T-cell (primary cell): ENCODE measurements at regions of chr14 and their contacts with region 1.

Region 1: DNA sequence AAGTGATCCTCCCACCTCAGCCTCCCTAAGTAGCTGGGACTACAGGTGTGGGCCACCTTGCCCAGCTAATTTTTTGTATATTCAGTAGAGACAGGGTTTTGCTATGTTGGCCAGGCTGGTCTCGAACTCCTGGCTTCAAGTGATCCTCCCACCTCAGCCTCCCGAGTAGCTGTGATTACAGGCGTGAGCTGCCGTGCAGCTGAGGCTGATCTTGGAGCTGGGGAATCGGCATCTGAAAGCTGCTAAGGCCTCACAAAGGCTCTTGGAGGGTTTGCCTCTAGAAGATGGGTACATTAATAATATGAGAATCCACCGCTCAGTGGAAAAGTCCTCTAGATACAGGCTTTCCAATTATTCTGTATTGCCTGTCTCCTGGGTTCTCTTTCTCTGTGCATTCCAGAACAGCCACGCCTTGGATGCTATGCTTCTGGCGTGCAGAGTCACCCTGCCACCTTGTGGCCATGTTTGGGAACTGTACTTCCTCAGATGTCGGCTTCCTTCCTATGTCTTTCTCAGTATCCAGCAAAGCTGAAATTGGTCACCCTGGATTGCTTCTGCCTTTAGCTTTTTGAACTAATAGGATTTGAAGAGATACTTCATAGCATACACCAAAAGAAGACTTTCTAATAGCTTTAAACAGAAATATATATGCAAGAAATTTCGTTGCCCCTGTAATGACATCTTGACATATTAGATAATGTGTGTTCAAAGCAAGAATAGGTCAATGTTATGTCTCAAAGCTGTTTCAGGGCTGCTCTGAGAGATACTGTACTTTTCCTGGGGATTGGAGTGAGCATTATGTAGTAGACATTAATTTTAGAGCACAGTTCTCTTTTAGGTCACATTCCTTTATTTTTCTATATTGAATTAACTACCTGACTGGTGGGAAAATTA is 75.4 kb downstream of the SNAPC1 start:
- DNase-seq: peak; percentile 29 to 89 (median 63)
- ATAC-seq: peak; percentile 80 to 95 (median 92)
- H3K4me3 ChIP-seq: no peak overlapping the region
- H3K4me3 Mint-ChIP-seq: no peak overlapping the region
- H3K27ac ChIP-seq: no peak overlapping the region
- H3K27ac Mint-ChIP-seq: no peak overlapping the region
- H3K4me1 ChIP-seq: no peaks in the 10 kb centered on the region
- H3K4me1 Mint-ChIP-seq: peaks cover 0 to 5% (median 0%) of the 10 kb centered on the region in 3 donors
- H3K27me3 ChIP-seq: peaks cover 0 to 4% of the 10 kb centered on the region in 2 experiments
- H3K27me3 Mint-ChIP-seq: peaks cover 0 to 4% of the 10 kb centered on the region in 2 donors

Region 2: DNA sequence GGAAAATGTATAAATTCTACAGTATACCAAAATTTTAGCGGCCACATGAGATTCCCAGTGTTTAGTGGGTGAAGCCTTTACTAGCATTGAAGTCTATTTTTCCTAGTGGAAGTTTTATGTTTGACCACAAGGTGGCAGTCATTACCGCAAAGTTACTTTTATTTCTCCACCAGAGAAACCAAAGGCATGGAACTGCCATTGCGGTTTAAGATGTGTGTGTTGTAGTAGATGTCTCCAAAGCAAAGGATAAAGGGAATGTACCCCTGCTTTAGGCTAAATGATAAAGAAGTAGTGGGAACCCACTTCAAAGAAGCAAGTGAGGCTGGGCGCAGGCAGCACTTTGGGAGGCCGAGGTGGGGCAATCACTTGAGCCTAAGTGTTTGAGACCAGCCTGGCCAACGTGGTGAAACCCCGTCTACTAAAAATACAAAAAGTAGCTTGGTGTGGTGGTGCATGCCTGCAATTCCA is 375.7 kb before region 1 on chr14:
- CTCF ChIA-PET with region 1: interaction called, 4 to 11 read pairs
- POLR2A ChIA-PET with region 1: no interaction called
- DNase-seq: peak in 8 of 35 experiments; percentile 14 to 82 (median 42)
- ATAC-seq: peak; percentile 57 to 71 (median 60)
- H3K4me3 ChIP-seq: no peak overlapping the region
- H3K4me3 Mint-ChIP-seq: peak overlapping the region in 2 of 3 donors; percentile 41 to 52
- H3K27ac ChIP-seq: peak overlapping the region; percentile 47
- H3K27ac Mint-ChIP-seq: peak overlapping the region; percentile 92
- H3K4me1 ChIP-seq: peaks cover 10 to 38% of the 10 kb centered on the region in 2 experiments
- H3K4me1 Mint-ChIP-seq: peaks cover 70 to 84% (median 71%) of the 10 kb centered on the region in 3 donors
- H3K27me3 ChIP-seq: no peaks in the 10 kb centered on the region
- H3K27me3 Mint-ChIP-seq: no peaks in the 10 kb centered on the region

Region 3: DNA sequence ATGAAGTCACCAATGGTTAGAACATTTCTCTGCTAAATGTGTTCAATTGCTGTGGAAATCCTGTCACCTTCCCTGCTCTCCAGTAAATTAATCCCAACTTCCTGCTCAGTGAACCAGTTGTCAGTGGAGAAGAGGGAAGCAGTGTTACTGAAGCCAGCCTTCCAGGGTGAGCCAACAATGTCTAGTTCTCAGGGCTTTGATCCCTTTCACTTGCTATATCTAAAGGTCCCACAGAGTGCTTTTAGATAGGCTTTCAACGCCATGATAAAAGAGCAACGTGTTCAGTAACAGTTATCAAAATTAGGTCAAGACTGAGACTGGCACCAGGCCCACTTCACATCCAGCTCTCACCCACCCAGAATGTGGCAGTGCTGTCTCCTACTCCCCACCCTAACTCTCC is 1068.0 kb after region 1 on chr14:
- CTCF ChIA-PET with region 1: no interaction called
- POLR2A ChIA-PET with region 1: no interaction called
- DNase-seq: no peak
- ATAC-seq: no peak
- H3K4me3 ChIP-seq: no peak overlapping the region
- H3K4me3 Mint-ChIP-seq: no peak overlapping the region
- H3K27ac ChIP-seq: no peak overlapping the region
- H3K27ac Mint-ChIP-seq: no peak overlapping the region
- H3K4me1 ChIP-seq: no peaks in the 10 kb centered on the region
- H3K4me1 Mint-ChIP-seq: no peaks in the 10 kb centered on the region
- H3K27me3 ChIP-seq: no peaks in the 10 kb centered on the region
- H3K27me3 Mint-ChIP-seq: no peaks in the 10 kb centered on the region